ENCODE measurements at regions of chr3 and their contacts with region 1.

Region 1: DNA sequence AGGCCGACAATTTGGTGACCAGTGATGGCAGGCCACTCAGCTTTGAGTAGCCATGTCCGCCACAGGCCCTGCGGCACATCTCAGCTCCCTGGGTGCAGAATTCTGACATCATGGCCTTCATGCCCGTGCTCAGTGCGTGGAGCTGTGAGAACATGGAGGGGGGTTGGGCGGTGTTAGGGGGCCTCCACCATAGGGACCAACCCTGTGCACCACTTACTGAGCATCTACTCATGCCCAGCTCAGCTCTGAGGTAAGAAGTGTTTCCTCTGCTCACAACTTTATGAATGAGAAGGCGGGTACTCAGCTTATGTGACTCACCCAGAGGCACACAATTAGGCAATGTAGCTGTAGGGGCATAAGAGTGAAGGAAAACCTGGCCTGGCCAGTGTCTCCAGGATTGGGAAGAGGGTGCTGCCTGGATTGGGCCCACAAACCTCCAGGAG is 10.5 kb downstream of the ACOX2 start:
- DNase-seq: no peak
- ATAC-seq: peak in 1 of 8 donors; percentile 46
- H3K4me3 ChIP-seq: no peak overlapping the region
- H3K27ac ChIP-seq: no peak overlapping the region
- H3K4me1 ChIP-seq: peaks cover 0 to 23% (median 10%) of the 10 kb centered on the region in 9 donors
- H3K27me3 ChIP-seq: no peaks in the 10 kb centered on the region
- CTCF ChIP-seq: no peak

Region 2: GRCh38 chr3:58324391-58325390 is 201.8 kb before region 1 on chr3:
- intact Hi-C with region 1: loop called in 6 of 10 experiments (anchors 5 to 10 kb)
- DNase-seq: no peak
- ATAC-seq: no peak
- H3K4me3 ChIP-seq: no peak overlapping the region
- H3K27ac ChIP-seq: peak overlapping the region in 7 of 10 donors; percentile 16 to 72 (median 36)
- H3K4me1 ChIP-seq: peaks cover 0 to 25% (median 14%) of the 10 kb centered on the region in 9 donors
- H3K27me3 ChIP-seq: no peaks in the 10 kb centered on the region
- CTCF ChIP-seq: no peak

Region 3: GRCh38 chr3:58801541-58801940 is 275.0 kb after region 1 on chr3:
- intact Hi-C with region 1: no loop called
- DNase-seq: no peak
- ATAC-seq: no peak
- H3K4me3 ChIP-seq: no peak overlapping the region
- H3K27ac ChIP-seq: no peak overlapping the region
- H3K4me1 ChIP-seq: no peaks in the 10 kb centered on the region
- H3K27me3 ChIP-seq: no peaks in the 10 kb centered on the region
- CTCF ChIP-seq: no peak